ENCODE measurements at regions of chr6 and their contacts with region 1.

Region 1: GRCh38 chr6:154638369-154638768 is 94.8 kb upstream of the SCAF8 start:
- DNase-seq: peak; percentile 33
- ATAC-seq: no peak
- H3K4me3 ChIP-seq: no peak overlapping the region
- H3K27ac ChIP-seq: no peak overlapping the region
- H3K4me1 ChIP-seq: no peaks in the 10 kb centered on the region
- H3K27me3 ChIP-seq: no peaks in the 10 kb centered on the region
- CTCF ChIP-seq: no peak
- POLR2A ChIP-seq: no peak
- RAD21 ChIP-seq: no peak

Region 2: GRCh38 chr6:154474636-154475428 is 163.5 kb before region 1 on chr6:
- CTCF ChIA-PET with region 1: no interaction called
- POLR2A ChIA-PET with region 1: interaction called, 21 read pairs
- dilution Hi-C with region 1: no loop called
- in situ Hi-C with region 1: no loop called
- intact Hi-C with region 1: no loop called
- DNase-seq: peak; percentile 84
- ATAC-seq: peak; percentile 53
- H3K4me3 ChIP-seq: no peak overlapping the region
- H3K27ac ChIP-seq: no peak overlapping the region
- H3K4me1 ChIP-seq: peaks cover 16% of the 10 kb centered on the region
- H3K27me3 ChIP-seq: no peaks in the 10 kb centered on the region
- CTCF ChIP-seq: no peak
- POLR2A ChIP-seq: no peak
- RAD21 ChIP-seq: no peak